ENCODE measurements at regions of chr1 and their contacts with region 1.

Region 1: DNA sequence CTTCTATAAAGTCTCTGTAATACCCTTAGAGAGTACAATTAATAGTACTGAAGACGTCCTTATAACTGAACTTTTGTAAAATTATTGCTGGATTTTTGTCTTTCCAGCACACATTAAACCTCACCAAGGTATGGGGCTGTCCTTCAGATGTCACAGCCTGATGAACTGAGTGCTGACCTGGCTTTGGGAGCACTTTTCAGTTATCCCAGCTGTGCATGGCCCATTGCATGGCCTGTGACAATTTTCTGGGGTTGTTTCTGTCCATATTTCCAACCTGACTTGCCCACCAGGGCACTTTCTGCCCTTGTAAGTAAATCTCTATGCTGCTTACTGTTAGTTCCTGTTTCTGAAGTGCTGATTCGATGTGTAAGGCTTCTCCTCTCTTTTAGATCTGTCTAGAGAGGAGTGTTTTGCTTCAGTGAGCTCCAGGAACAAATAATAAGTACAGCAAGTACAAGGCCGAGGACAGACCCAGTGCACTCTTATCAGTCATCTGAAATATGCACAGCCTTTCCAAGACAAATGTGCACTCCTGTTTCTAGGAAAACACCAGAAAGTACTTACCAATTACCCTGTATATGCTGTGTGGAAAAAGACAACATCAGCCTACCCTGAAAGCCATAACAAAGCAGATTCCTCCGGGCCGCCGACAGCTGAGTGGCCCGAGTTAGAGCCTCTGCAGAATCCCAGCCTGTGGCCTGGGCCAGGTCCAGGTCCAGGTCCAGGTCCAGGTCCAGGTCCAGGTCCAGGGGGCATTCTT is 121.7 kb downstream of the DHRS3 start:
- DNase-seq: no peak
- ATAC-seq: peak; percentile 88
- H3K4me3 ChIP-seq: no peak overlapping the region
- H3K27ac ChIP-seq: peak overlapping the region; percentile 50 to 91
- H3K4me1 ChIP-seq: peaks cover 2 to 8% of the 10 kb centered on the region in 2 donors
- H3K27me3 ChIP-seq: no peaks in the 10 kb centered on the region

Region 2: GRCh38 chr1:12386130-12386529 is 110.2 kb before region 1 on chr1:
- intact Hi-C with region 1: no loop called
- DNase-seq: no peak
- ATAC-seq: no peak
- H3K4me3 ChIP-seq: no peak overlapping the region
- H3K27ac ChIP-seq: no peak overlapping the region
- H3K4me1 ChIP-seq: no peaks in the 10 kb centered on the region
- H3K27me3 ChIP-seq: no peaks in the 10 kb centered on the region

Region 3: DNA sequence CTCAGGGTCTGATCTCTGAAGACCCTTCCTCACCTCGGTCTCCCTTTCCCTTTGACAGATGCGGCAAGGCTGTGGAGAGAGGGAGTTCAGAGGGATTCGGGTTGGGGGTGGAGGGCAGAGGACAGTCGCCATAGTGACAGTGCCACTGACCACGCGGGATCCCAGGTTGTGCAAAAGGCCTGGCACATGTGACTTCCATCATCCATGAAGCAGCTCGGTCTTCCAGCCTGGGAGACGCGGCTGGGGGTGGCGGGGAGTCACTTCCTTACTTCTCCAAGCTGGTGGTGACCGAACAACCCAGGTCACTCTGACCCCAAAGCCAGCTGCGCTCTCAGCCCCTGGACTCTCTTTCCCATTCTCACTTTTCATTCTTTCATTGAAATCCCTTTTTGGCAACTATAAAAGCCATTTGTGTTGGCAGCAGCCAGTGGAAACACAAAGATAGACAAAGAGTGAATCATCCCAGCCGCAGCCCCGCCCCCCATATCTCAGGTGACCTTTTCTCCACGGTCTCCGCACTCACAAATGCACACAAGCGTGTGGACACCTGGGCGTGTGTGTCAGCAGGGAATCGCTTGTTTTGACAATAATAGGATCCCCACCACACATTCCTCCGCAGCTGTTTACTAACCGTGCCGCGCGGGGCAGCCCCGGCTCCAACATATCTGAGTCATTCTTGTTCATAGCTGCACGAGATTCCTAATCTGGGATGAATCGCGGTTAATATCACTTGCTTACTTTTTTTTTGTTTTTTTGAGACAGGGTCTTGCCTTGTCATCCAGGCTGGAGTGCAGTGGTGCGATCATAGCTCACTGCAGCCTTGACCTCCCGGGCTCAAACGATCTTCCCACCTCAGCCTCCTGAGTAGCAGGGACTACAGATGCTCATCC is 53.4 kb after region 1 on chr1:
- intact Hi-C with region 1: loop called in 1 of 2 experiments (anchors 5 kb)
- DNase-seq: peak; percentile 85 to 90
- ATAC-seq: peak; percentile 55
- H3K4me3 ChIP-seq: no peak overlapping the region
- H3K27ac ChIP-seq: no peak overlapping the region
- H3K4me1 ChIP-seq: peaks cover 0 to 2% of the 10 kb centered on the region in 2 donors
- H3K27me3 ChIP-seq: no peaks in the 10 kb centered on the region

Measured in aorta (tissue), 5 donors.